K562 (cell line): ENCODE measurements at regions of chr7 and their contacts with region 1.

Region 1: GRCh38 chr7:30893357-30893756 is 18.3 kb upstream of the AQP1 start:
- DNase-seq: no peak
- ATAC-seq: no peak
- H3K4me3 ChIP-seq: no peak overlapping the region
- H3K27ac ChIP-seq: no peak overlapping the region
- H3K4me1 ChIP-seq: peaks cover 24 to 40% of the 10 kb centered on the region in 2 experiments
- H3K27me3 ChIP-seq: no peaks in the 10 kb centered on the region
- CTCF ChIP-seq: no peak
- EP300 ChIP-seq: no peak
- POLR2A ChIP-seq: no peak
- RAD21 ChIP-seq: no peak

Region 2: GRCh38 chr7:30764030-30764975 is 129.1 kb before region 1 on chr7:
- CTCF ChIA-PET with region 1: no interaction called
- POLR2A ChIA-PET with region 1: no interaction called
- in situ Hi-C with region 1: no loop called
- intact Hi-C with region 1: loop called (anchors 5 kb)
- DNase-seq: no peak
- ATAC-seq: no peak
- H3K4me3 ChIP-seq: no peak overlapping the region
- H3K27ac ChIP-seq: no peak overlapping the region
- H3K4me1 ChIP-seq: peaks cover 20 to 49% of the 10 kb centered on the region in 2 experiments
- H3K27me3 ChIP-seq: no peaks in the 10 kb centered on the region
- CTCF ChIP-seq: no peak
- EP300 ChIP-seq: no peak
- POLR2A ChIP-seq: no peak
- RAD21 ChIP-seq: no peak

Region 3: GRCh38 chr7:30800785-30801252 is 92.5 kb before region 1 on chr7:
- CTCF ChIA-PET with region 1: interaction called, 3 read pairs
- POLR2A ChIA-PET with region 1: no interaction called
- in situ Hi-C with region 1: no loop called
- intact Hi-C with region 1: loop called (anchors 5 kb)
- DNase-seq: peak; percentile 62 to 72 (median 65)
- ATAC-seq: peak; percentile 89
- H3K4me3 ChIP-seq: no peak overlapping the region
- H3K27ac ChIP-seq: no peak overlapping the region
- H3K4me1 ChIP-seq: no peaks in the 10 kb centered on the region; a peak in 2 of 5 replicates
- H3K27me3 ChIP-seq: no peaks in the 10 kb centered on the region
- CTCF ChIP-seq: peak; percentile 70 to 83 (median 74)
- EP300 ChIP-seq: no peak
- POLR2A ChIP-seq: no peak
- RAD21 ChIP-seq: peak; percentile 74 to 85

Region 4: GRCh38 chr7:30914596-30914995 is 21.2 kb after region 1 on chr7:
- CTCF ChIA-PET with region 1: no interaction called
- POLR2A ChIA-PET with region 1: interaction called, 6 read pairs
- in situ Hi-C with region 1: no loop called
- intact Hi-C with region 1: loop called (anchors 2 kb)
- DNase-seq: peak in 1 of 4 experiments; percentile 53
- ATAC-seq: peak; percentile 29
- H3K4me3 ChIP-seq: peak overlapping the region; percentile 5; the same call in 1 of the 2 replicates
- H3K27ac ChIP-seq: peak overlapping the region; percentile 82
- H3K4me1 ChIP-seq: peaks cover 71 to 82% of the 10 kb centered on the region in 2 experiments
- H3K27me3 ChIP-seq: no peaks in the 10 kb centered on the region
- CTCF ChIP-seq: 0 out of 6 replicates have a peak, but pooled peaks of 1 of the 3 experiments have one; percentile 6
- EP300 ChIP-seq: no peak
- POLR2A ChIP-seq: no peak
- RAD21 ChIP-seq: no peak

Region 5: GRCh38 chr7:30941582-30942309 is 48.4 kb after region 1 on chr7:
- CTCF ChIA-PET with region 1: no interaction called
- POLR2A ChIA-PET with region 1: no interaction called
- in situ Hi-C with region 1: no loop called
- intact Hi-C with region 1: no loop called
- DNase-seq: no peak
- ATAC-seq: no peak
- H3K4me3 ChIP-seq: no peak overlapping the region
- H3K27ac ChIP-seq: no peak overlapping the region
- H3K4me1 ChIP-seq: peaks cover 0 to 8% of the 10 kb centered on the region in 2 experiments; a peak in 3 of 5 replicates
- H3K27me3 ChIP-seq: no peaks in the 10 kb centered on the region; a peak in 1 of 5 replicates
- CTCF ChIP-seq: no peak
- EP300 ChIP-seq: no peak
- POLR2A ChIP-seq: no peak
- RAD21 ChIP-seq: no peak

Region 6: DNA sequence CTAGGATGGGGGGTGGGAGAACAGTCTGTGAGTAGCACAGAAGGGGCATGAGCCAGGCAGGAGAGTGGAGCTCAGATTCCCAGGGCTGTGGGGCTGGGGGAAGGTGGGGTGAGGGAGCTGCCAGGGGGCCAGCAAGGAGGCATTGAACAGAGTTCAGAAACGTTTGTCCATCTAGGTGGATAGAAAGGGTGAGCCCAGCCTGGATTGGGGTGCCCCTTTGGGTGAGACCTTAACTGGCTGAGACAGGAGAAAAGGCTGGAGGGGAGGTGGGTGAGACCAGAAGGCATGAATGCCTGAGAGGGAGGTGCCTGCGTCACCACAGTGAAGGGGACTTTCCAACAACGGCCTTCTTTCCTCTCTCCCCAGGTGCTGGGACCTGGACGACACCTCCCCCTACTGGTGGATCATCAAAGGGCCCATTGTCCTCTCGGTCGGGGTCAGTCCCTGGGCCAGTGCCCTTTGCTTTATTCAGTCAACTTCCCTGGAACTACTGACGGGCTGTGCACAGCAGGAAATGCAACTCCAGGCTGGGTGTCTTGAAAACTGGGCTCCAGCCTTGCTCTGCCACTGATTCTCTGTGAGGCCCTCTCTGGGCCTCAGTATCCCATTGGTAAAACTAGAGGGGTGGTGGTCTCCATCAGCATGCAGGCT is 81.4 kb after region 1 on chr7:
- CTCF ChIA-PET with region 1: no interaction called
- POLR2A ChIA-PET with region 1: no interaction called
- in situ Hi-C with region 1: loop called (anchors 5 kb)
- intact Hi-C with region 1: loop called (anchors 10 kb)
- DNase-seq: peak; percentile 82 to 86 (median 84)
- ATAC-seq: peak; percentile 97
- H3K4me3 ChIP-seq: no peak overlapping the region
- H3K27ac ChIP-seq: no peak overlapping the region
- H3K4me1 ChIP-seq: peaks cover 3 to 19% of the 10 kb centered on the region in 2 experiments; a peak in 4 of 5 replicates
- H3K27me3 ChIP-seq: peaks cover 13 to 28% of the 10 kb centered on the region in 2 experiments; a peak in 4 of 5 replicates
- CTCF ChIP-seq: peak; percentile 90 to 96 (median 95)
- EP300 ChIP-seq: no peak
- POLR2A ChIP-seq: no peak
- RAD21 ChIP-seq: peak; percentile 88 to 96